Activated T-helper 1 cell treated with anti-CD3 and anti-CD28 coated beads, Interleukin-12 subunit alpha, Interleukin-12 subunit beta, Interleukin-2, Interleukin-4 antibody, amounts not matched to agents 30 ng/mL and 10 ng/mL and 1 ng/mL, durations not matched to agents 14 hours and 24 hours and 36 hours (primary cell): ENCODE measurements at regions of chr6 and their contacts with region 1.

Region 1: DNA sequence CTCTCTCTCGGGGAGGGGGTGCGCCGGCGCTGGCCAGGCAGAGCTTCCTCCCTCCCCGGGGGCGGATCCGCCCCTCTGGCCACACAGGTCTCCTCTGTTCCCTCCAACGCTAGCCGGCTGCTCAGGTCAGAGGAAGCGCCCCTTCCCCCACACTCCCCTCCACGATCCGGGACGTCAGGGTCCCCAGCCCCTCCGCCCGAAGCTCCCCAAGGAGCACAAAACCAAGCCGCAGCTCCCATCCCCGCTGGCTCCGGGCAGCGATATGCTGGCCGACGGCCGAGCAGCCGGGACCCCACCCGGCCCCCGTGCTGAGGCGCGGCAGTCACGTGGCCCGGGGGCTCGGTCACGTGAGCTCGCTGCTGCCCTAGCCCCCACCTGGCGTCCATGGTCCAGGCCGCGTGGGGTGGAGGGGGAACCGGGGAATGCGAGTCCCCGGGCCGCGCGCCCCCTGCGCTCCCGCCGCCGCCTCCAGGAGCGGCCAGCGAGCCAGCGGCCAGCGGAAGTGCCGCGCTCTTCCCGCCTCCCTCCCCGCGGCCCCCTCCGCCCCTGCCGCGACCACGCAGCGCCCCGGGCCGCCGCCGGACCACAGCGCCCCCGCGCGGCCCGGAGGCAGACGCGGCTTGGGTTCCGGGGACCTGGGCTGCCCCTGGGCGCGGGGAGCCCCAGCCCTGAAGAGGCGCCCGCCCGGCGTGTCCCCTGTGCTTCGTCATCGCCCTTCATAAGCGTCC is at the start of gene SLC35B2:
- DNase-seq: peak; percentile 70
- H3K4me3 Mint-ChIP-seq: peak within 1 kb of the TSS; percentile 90
- H3K27ac Mint-ChIP-seq: peak within 1 kb of the TSS; percentile 81
- H3K4me1 Mint-ChIP-seq: peaks cover 75% of the 10 kb centered on the region
- H3K27me3 Mint-ChIP-seq: no peaks in the 10 kb centered on the region
- total RNA-seq, gene SLC35B2: 29.2 and 30.1 TPM in 2 replicates

Region 2: DNA sequence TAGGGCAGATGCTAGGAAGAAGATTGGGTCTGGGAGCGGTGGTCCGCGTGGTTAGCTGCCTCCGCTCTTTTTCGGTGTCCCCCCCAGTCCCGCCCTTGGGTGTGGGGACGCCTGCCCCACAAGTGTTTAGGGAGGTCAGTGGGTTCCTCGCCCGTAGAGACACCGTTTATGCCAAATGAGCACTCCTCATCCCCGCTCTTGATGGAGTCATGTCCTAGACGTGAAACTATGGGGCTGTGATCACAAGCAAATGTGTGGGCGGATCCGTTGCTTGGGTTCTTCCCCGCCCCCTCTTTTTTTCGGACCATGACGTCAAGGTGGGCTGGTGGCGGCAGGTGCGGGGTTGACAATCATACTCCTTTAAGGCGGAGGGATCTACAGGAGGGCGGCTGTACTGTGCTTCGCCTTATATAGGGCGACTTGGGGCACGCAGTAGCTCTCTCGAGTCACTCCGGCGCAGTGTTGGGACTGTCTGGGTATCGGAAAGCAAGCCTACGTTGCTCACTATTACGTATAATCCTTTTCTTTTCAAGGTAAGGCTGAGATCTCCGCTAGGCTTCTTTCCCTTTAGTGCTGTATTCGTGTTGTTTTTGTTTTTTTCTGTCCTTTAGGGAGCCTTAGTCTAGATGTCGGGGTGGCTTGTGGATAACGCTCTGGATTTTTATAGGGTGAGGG is 10.4 kb before region 1 on chr6 and contains the start of gene HSP90AB1:
- intact Hi-C with region 1: loop called (anchors 1 kb)
- DNase-seq: peak; percentile 96
- H3K4me3 Mint-ChIP-seq: peak within 1 kb of the TSS; percentile 96
- H3K27ac Mint-ChIP-seq: peak within 1 kb of the TSS; percentile 98
- H3K4me1 Mint-ChIP-seq: peaks cover 45% of the 10 kb centered on the region
- H3K27me3 Mint-ChIP-seq: peaks cover 5% of the 10 kb centered on the region
- total RNA-seq, gene HSP90AB1: 2,065 and 2,095 TPM in 2 replicates